GM12878 (cell line): ENCODE measurements at regions of chr6 and their contacts with region 1.

Region 1: GRCh38 chr6:159968440-159969203 is at the start of gene IGF2R:
- DNase-seq: no peak
- ATAC-seq: peak; percentile 86
- H3K4me3 ChIP-seq: peak within 1 kb of the TSS; percentile 85
- H3K27ac ChIP-seq: peak within 1 kb of the TSS; percentile 84
- H3K4me1 ChIP-seq: 0 out of 2 replicates have a peak, but pooled peaks cover 3% of the 10 kb centered on the region
- H3K27me3 ChIP-seq: no peaks in the 10 kb centered on the region
- CTCF ChIP-seq: no peak
- EP300 ChIP-seq: no peak; a peak in 1 of 4 replicates
- POLR2A ChIP-seq: peak; percentile 94
- RAD21 ChIP-seq: 0 out of 2 replicates have a peak, but pooled peaks have one; percentile 15
- polyA plus RNA-seq, gene IGF2R: 1.00 to 1.5 TPM

Region 2: DNA sequence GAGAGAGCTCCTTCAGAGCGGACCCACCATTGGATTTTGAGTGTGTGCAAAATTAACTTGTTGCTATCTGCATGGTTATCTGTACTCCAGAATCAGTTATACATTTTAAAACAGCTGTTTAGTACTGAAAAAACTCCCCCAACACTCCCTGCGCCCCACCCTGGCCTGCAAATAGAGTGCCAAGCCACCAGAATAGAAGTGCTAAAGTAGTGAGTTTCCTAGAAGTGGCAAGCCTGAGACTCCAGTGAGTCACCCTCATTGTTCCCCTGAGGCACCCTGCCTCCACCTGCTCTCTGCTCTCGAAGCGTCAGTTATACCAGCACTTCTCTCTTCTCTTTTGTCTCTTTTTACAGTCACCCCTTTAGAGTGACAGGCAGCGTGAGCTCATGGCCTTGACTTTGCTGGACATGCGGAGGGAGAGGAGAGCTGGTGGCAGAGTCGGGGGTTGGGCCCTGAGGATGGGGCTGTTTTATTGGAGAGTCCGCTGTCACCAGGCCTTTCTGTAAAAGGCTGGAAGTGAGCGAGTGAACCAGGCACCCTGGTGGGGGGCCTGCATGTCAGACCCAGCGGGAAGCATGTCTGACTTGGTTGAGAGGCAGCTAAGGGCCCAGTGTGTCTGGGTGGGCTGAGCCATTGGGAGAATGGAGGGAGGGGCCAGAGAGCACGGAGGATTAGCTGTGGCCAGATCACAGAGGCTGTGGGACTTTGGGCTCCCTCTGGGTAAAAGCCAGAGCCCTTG is 10.7 kb after region 1 on chr6:
- CTCF ChIA-PET with region 1: interaction called, 6 read pairs
- POLR2A ChIA-PET with region 1: interaction called, 92 read pairs
- RAD21 ChIA-PET with region 1: interaction called, 37 read pairs
- SMC1A ChIA-PET with region 1: interaction called, 66 read pairs
- in situ Hi-C with region 1: no loop called
- intact Hi-C with region 1: no loop called
- DNase-seq: peak; percentile 75
- ATAC-seq: peak; percentile 70
- H3K4me3 ChIP-seq: peak overlapping the region; percentile 54
- H3K27ac ChIP-seq: peak overlapping the region; percentile 96
- H3K4me1 ChIP-seq: peaks cover 55% of the 10 kb centered on the region
- H3K27me3 ChIP-seq: no peaks in the 10 kb centered on the region
- CTCF ChIP-seq: 0 out of 6 replicates have a peak, but pooled peaks of 1 of the 3 experiments have one; percentile 2
- EP300 ChIP-seq: peak; percentile 71 to 85; a peak in 3 of 4 replicates
- POLR2A ChIP-seq: peak; percentile 44; the same call in 1 of the 2 replicates
- RAD21 ChIP-seq: no peak

Region 3: GRCh38 chr6:160092602-160093001 is 124.0 kb after region 1 on chr6:
- CTCF ChIA-PET with region 1: no interaction called
- POLR2A ChIA-PET with region 1: no interaction called
- RAD21 ChIA-PET with region 1: no interaction called
- SMC1A ChIA-PET with region 1: no interaction called
- in situ Hi-C with region 1: no loop called
- intact Hi-C with region 1: no loop called
- DNase-seq: no peak
- ATAC-seq: no peak
- H3K4me3 ChIP-seq: no peak overlapping the region
- H3K27ac ChIP-seq: no peak overlapping the region
- H3K4me1 ChIP-seq: no peaks in the 10 kb centered on the region
- H3K27me3 ChIP-seq: no peaks in the 10 kb centered on the region
- CTCF ChIP-seq: no peak
- EP300 ChIP-seq: no peak
- POLR2A ChIP-seq: no peak
- RAD21 ChIP-seq: no peak